HCT116 (cell line): ENCODE measurements at regions of chr10 and their contacts with region 1.

Region 1: DNA sequence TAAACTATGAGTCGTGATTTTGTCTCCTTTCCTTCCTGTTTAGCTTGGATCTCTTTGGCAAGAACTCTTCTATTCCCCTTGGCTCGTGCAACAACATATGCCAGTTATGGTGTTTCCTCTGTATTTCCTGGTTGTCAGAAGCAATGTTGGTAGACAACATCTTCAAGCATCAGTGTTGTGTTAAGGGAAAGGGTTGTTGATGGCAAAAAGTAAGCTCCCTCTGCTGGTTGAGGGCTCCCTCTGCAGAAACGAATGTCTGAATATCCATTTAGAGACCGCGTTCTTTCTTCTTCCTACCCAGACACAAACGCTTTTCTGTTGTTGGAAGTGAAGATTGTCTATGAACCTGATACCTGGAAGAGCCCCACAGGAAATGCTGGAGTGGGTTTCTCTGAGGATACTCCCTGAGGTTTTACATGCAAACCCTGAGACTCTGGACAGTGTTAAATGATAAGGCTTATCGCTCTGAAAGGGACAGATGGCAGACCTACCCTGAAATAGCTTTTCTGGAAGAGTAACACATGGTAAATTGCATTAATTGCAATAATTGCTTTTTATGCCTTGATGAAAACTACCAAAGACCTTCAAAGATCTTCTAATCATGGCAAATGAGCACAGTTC is 23.5 kb upstream of the C1QL3 start:
- DNase-seq: peak; percentile 6
- ATAC-seq: peak; percentile 72
- H3K4me3 ChIP-seq: no peak overlapping the region
- H3K27ac ChIP-seq: no peak overlapping the region
- H3K4me1 ChIP-seq: no peaks in the 10 kb centered on the region
- H3K27me3 ChIP-seq: no peaks in the 10 kb centered on the region
- CTCF ChIP-seq: peak; percentile 27 to 74 (median 70); a peak in 5 of 6 replicates
- POLR2A ChIP-seq: no peak
- RAD21 ChIP-seq: peak; percentile 50

Region 2: GRCh38 chr10:15879058-15879457 is 666.2 kb before region 1 on chr10:
- CTCF ChIA-PET with region 1: no interaction called
- POLR2A ChIA-PET with region 1: no interaction called
- RAD21 ChIA-PET with region 1: no interaction called
- intact Hi-C with region 1: loop called (anchors 1 kb)
- DNase-seq: no peak
- ATAC-seq: peak; percentile 53
- H3K4me3 ChIP-seq: no peak overlapping the region
- H3K27ac ChIP-seq: no peak overlapping the region
- H3K4me1 ChIP-seq: no peaks in the 10 kb centered on the region
- H3K27me3 ChIP-seq: peaks cover 33% of the 10 kb centered on the region
- CTCF ChIP-seq: peak; percentile 48 to 82 (median 59); a peak in 5 of 6 replicates
- POLR2A ChIP-seq: no peak
- RAD21 ChIP-seq: peak; percentile 69

Region 3: DNA sequence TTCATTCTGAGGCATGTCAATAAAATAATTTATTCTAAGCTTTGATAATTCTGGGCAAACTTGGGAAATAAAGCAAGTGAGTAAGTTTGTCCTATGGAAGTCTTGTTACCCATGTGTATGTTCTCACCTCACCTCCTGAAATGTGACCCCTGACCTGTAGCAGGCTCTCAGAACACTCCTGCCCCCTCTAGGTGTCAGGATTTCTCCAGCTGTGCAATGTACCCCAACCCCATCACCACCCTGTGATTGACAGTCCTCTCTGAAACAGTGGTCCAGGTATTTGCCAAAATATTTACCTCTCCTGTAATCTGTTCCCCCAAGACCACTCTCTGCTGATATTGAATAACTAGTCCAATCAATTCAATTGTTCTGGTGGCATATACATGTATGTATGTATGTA is 231.0 kb before region 1 on chr10:
- CTCF ChIA-PET with region 1: no interaction called
- POLR2A ChIA-PET with region 1: no interaction called
- RAD21 ChIA-PET with region 1: no interaction called
- intact Hi-C with region 1: loop called (anchors 2 kb)
- DNase-seq: peak; percentile 2
- ATAC-seq: peak; percentile 61; the same call in 1 of the 2 replicates
- H3K4me3 ChIP-seq: no peak overlapping the region
- H3K27ac ChIP-seq: no peak overlapping the region
- H3K4me1 ChIP-seq: no peaks in the 10 kb centered on the region
- H3K27me3 ChIP-seq: peaks cover 6% of the 10 kb centered on the region
- CTCF ChIP-seq: peak; percentile 8 to 34 (median 26); a peak in 3 of 6 replicates
- POLR2A ChIP-seq: no peak
- RAD21 ChIP-seq: peak; percentile 55

Region 4: GRCh38 chr10:16392531-16393069 is 152.6 kb before region 1 on chr10:
- CTCF ChIA-PET with region 1: no interaction called
- POLR2A ChIA-PET with region 1: no interaction called
- RAD21 ChIA-PET with region 1: no interaction called
- intact Hi-C with region 1: no loop called
- DNase-seq: no peak
- ATAC-seq: no peak
- H3K4me3 ChIP-seq: no peak overlapping the region
- H3K27ac ChIP-seq: no peak overlapping the region
- H3K4me1 ChIP-seq: no peaks in the 10 kb centered on the region
- H3K27me3 ChIP-seq: peaks cover 21% of the 10 kb centered on the region
- CTCF ChIP-seq: no peak
- POLR2A ChIP-seq: no peak
- RAD21 ChIP-seq: no peak